Activated B cell treated with CpG ODN at 0.5 μM for 24 hours (primary cell): ENCODE measurements at regions of chr11 and their contacts with region 1.

Region 1: GRCh38 chr11:64204464-64204989 is 2.0 kb upstream of the FERMT3 start:
- DNase-seq: peak; percentile 49
- ATAC-seq: peak; percentile 22
- H3K4me3 Mint-ChIP-seq: peak overlapping the region; percentile 73
- H3K27ac Mint-ChIP-seq: peak overlapping the region; percentile 83
- H3K4me1 Mint-ChIP-seq: peaks cover 44% of the 10 kb centered on the region
- H3K27me3 Mint-ChIP-seq: no peaks in the 10 kb centered on the region
- CTCF ChIP-seq: no peak

Region 2: DNA sequence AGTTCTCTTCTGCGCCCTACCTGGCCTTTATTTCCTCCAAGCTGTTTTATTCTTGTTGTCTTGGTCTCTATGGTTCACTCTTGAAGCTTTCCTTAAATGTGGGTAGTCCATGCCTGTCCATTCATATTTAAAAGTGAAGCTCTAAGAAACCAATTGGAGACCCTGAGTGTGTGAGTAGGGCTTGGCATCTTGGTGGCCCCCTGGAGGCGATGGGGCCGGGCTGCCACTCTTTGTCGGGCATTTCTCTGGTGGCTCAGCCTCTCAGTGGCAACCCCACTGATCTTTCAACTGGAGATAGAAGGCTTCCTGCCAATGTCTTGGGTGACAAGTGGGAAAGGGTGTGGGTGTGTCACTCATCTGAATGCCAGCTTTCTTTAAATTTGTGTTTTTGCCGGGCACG is 12.4 kb after region 1 on chr11:
- CTCF ChIA-PET with region 1: interaction called, 29 read pairs
- POLR2A ChIA-PET with region 1: interaction called, 191 read pairs
- intact Hi-C with region 1: no loop called
- DNase-seq: no peak
- ATAC-seq: peak; percentile 23
- H3K4me3 Mint-ChIP-seq: no peak overlapping the region
- H3K27ac Mint-ChIP-seq: peak overlapping the region; percentile 46
- H3K4me1 Mint-ChIP-seq: peaks cover 37% of the 10 kb centered on the region
- H3K27me3 Mint-ChIP-seq: no peaks in the 10 kb centered on the region
- CTCF ChIP-seq: no peak

Region 3: DNA sequence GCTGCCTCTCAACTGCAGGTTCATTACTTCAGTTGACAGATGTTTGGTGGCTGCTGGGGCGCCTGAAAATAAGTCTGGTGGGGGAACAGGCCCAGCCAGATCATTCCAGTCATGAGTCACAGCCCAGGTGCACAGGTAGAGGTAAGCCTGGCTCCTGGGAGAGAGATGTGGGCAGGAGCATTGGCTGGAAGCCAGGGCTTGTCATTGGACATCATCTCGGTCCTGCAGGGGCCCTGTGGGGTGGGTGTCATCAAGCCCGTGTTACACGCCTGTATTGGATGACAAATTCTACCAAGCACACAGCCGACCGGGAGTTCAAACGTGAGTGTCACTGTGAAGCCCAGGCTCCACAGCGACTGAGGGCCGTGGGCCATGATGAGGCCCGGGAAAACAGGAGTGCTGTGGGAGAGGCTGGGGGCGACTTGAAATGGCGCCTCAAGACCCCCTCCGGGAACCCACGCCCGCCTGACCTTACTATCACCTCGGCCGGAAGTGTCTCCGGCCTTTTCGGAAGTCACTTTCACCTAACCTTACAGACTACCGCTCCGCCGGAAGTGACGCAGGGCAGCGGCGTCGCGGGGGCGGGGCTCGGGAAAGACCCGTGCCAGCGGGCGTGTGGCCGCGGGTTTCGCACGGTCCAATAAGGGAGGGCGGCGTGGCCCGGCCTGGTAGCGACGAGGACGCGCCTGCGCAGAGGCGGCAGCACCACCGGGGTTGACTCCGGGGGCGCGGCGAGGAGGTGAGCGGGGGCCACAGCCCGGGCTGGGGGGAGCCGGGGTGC is 36.1 kb after region 1 on chr11 and contains the start of gene FKBP2:
- CTCF ChIA-PET with region 1: interaction called, 37 read pairs
- POLR2A ChIA-PET with region 1: interaction called, 127 read pairs
- intact Hi-C with region 1: loop called (anchors 1 kb)
- DNase-seq: peak; percentile 98
- ATAC-seq: peak; percentile 61
- H3K4me3 Mint-ChIP-seq: peak within 1 kb of the TSS; percentile 91
- H3K27ac Mint-ChIP-seq: peak within 1 kb of the TSS; percentile 98
- H3K4me1 Mint-ChIP-seq: peaks cover 75% of the 10 kb centered on the region
- H3K27me3 Mint-ChIP-seq: no peaks in the 10 kb centered on the region
- CTCF ChIP-seq: no peak
- total RNA-seq, gene FKBP2: 31.4 and 39.4 TPM in 2 replicates

Region 4: DNA sequence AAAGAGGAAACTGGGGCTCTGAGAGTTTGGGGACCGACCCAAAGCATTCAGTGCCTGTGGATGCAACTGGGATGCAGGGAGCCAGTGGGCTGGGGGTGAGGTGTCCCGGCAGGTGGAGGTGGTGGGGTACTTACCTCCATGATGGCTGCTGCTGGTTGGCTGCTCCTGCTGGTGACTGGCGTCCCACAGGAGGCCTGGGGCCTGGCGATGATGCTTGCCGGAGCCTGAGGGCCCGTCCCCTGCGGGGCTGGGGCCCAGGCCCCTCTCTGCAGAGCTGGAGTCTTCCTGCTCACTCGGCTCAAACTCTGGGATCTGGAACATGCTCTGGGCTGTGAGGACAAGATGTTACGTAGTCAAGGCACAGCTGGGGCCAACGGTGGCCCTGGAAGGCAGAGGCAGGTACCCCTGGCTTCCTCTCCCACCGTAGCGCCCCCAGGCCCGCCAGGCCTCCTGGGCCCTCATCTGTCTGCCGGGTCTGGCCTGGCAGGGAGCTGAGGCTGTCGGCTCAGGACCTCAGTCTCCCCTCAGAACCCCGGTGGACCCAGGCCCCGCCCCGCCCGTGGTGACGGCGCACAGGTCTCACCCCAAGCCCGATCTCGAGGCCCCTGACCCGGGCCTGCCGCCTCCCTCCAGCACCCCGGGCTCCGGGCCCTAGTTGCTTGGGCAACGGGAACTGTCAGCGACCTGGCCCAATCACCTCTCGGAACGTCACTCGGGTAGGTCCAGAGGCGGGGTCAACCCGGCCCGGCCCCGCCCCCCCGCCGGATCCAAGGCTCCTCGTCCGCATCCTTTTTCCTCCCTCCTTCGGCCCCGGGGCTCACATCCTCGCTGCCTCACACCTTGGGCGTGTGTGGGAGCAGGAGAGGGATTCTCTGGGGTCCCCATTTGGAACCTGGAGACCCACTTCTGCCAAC is 79.8 kb after region 1 on chr11 and contains the start of gene BAD:
- CTCF ChIA-PET with region 1: interaction called, 6 read pairs
- POLR2A ChIA-PET with region 1: interaction called, 27 read pairs
- intact Hi-C with region 1: no loop called
- DNase-seq: peak; percentile 80
- ATAC-seq: peak; percentile 79
- H3K4me3 Mint-ChIP-seq: peak within 1 kb of the TSS; percentile 90
- H3K27ac Mint-ChIP-seq: peak within 1 kb of the TSS; percentile 92
- H3K4me1 Mint-ChIP-seq: peaks cover 20% of the 10 kb centered on the region
- H3K27me3 Mint-ChIP-seq: no peaks in the 10 kb centered on the region
- CTCF ChIP-seq: no peak
- total RNA-seq, gene BAD: 21.7 and 26.6 TPM in 2 replicates

Region 5: GRCh38 chr11:64358907-64359711 is 154.6 kb after region 1 on chr11 and contains the start of gene RPS6KA4:
- CTCF ChIA-PET with region 1: interaction called, 25 read pairs
- POLR2A ChIA-PET with region 1: interaction called, 4 read pairs
- intact Hi-C with region 1: no loop called
- DNase-seq: peak; percentile 55
- ATAC-seq: peak; percentile 72
- H3K4me3 Mint-ChIP-seq: peak within 1 kb of the TSS; percentile 82
- H3K27ac Mint-ChIP-seq: peak within 1 kb of the TSS; percentile 53
- H3K4me1 Mint-ChIP-seq: peaks cover 47% of the 10 kb centered on the region
- H3K27me3 Mint-ChIP-seq: no peaks in the 10 kb centered on the region
- CTCF ChIP-seq: no peak
- total RNA-seq, gene RPS6KA4: 18.0 and 22.6 TPM in 2 replicates